ENCODE measurements at regions of chrX and their contacts with region 1.

Region 1: DNA sequence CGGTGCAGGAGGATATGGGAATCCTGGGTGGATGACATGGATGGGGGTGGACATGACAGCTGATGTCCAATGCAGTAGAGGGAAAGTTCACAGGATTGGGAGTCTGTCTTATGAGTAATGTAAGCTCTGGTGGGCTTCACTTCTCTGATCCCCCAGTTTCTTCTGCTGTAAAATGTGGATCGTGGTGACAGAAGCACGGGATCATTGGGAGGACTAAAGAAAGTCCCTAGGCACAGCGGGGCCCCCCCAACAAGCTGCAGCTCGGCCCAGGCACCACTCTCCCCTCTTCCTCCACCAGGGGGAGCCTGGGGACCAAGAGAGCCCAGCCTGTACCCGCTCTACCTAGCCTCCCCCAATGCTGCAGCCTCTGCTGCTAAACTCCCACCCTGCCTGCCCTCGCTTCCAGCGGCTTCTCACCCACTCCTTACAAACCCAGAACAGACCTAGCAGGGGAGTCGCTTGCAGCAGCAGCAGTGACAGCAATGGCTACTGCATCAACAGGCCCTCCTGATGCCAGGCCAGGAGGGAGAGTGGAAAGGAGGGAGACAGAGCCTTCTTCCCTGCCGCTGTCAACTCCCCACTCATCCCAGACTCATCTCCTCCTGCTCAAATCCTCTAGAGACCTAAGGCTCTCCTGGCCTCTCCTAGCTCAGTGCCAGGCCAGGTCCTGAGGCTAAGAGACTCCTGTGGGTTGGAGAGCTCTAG is 36.1 kb upstream of the IQSEC2 start:
- DNase-seq: peak; percentile 15 to 82
- H3K4me3 ChIP-seq: peak overlapping the region in 2 of 4 experiments; percentile 3 to 19; a peak in 2 of 8 replicates
- H3K27ac ChIP-seq: no peak overlapping the region
- H3K4me1 ChIP-seq: peaks cover 4 to 20% (median 7%) of the 10 kb centered on the region in 4 experiments
- H3K27me3 ChIP-seq: peaks cover 1 to 29% (median 16%) of the 10 kb centered on the region in 4 experiments; a peak in 6 of 7 replicates
- CTCF ChIP-seq: peak in 2 of 3 experiments; percentile 68 to 72; a peak in 3 of 4 replicates
- EP300 ChIP-seq: no peak
- POLR2A ChIP-seq: no peak
- RAD21 ChIP-seq: peak; percentile 67 to 76

Region 2: DNA sequence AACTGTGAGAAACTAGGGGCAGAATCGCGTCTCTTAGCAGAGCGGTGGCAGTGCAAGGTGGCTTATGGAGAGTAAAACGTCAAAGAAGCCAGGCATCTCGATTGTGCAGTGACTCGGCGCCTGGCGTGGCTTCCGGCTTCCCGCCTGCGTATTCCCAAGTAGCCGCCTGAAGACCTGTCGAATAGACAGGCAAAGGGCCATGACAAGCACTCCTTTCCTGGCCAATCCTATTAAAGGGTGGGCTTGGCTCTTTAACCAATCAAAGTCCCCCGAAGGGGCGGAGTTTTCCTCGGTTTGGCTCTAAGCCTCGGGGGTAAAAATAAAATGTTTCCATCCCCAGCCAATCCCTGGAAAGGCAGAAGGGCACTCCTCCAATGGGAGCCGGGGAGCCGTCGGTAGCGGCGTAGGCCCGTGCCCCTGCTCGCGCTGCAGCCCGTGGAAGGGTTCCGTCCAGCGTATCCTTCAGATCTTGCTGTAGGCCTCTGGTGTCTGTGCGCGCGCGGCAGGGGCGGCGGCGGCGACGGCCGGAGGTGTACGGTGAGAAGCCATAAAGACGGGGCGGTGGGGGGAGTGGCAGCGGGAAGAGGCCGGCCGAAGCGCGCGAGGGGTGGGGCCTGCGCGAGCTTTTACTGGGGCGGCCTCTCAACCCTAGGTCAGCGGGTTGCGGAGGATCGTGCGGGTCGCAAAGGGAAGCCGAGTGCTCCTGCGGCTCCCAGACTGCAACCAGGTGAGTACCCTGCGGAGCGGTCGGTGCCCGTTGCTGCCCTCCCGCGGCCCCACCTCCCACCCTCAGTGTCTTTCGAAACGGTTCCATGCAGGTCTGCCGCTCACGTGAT is 223.6 kb before region 1 on chrX and contains the start of gene KANTR:
- CTCF ChIA-PET with region 1: no interaction called
- POLR2A ChIA-PET with region 1: no interaction called
- DNase-seq: peak; percentile 62 to 76
- H3K4me3 ChIP-seq: peak within 1 kb of the TSS; percentile 63 to 95 (median 76)
- H3K27ac ChIP-seq: peak within 1 kb of the TSS; percentile 71
- H3K4me1 ChIP-seq: no peaks in the 10 kb centered on the region
- H3K27me3 ChIP-seq: no peaks in the 10 kb centered on the region
- CTCF ChIP-seq: no peak
- EP300 ChIP-seq: no peak
- POLR2A ChIP-seq: peak in 1 of 2 experiments; percentile 15; a peak in 1 of 3 replicates
- RAD21 ChIP-seq: no peak
- total RNA-seq, gene KANTR: 7.5 and 9.5 TPM in 2 replicates

Region 3: GRCh38 chrX:53116101-53116500 is 201.4 kb before region 1 on chrX:
- CTCF ChIA-PET with region 1: no interaction called
- POLR2A ChIA-PET with region 1: no interaction called
- DNase-seq: no peak
- H3K4me3 ChIP-seq: no peak overlapping the region
- H3K27ac ChIP-seq: no peak overlapping the region
- H3K4me1 ChIP-seq: 0 out of 7 replicates have a peak, but pooled peaks cover 0 to 2% (median 0%) of the 10 kb centered on the region in 4 experiments
- H3K27me3 ChIP-seq: no peaks in the 10 kb centered on the region
- CTCF ChIP-seq: no peak
- EP300 ChIP-seq: no peak
- POLR2A ChIP-seq: no peak
- RAD21 ChIP-seq: no peak

Region 4: DNA sequence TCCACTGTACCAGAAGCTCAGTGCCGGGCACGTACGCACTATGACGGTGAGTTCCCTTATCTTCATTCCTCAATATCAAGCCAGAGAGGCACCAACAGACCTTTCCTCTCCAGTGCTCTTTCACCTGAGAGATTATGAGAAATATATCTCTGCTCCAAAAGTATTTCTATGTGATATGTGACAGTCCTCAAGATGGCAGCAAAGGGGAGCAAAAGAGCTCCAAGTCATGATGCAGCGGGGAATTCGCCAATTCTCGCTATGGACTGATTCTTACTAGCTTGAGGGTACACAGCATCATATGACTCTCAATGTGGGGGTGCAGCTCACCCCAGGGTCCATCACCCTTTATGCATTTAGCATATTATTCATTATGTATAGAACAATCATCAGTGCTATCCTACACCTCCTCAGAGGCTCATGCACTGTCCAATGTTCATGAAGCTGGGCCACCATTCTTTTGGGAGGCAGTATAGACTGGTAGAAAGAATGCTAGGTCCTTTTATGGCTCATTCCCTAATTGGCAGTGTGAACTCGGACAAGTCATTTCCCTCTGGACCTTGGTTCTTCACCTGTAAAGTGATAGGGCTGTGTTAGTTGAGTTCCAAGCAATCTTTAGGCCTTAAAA is 23.4 kb before region 1 on chrX:
- CTCF ChIA-PET with region 1: interaction called, 16 read pairs
- POLR2A ChIA-PET with region 1: no interaction called
- DNase-seq: no peak
- H3K4me3 ChIP-seq: no peak overlapping the region
- H3K27ac ChIP-seq: no peak overlapping the region
- H3K4me1 ChIP-seq: no peaks in the 10 kb centered on the region; a peak in 2 of 7 replicates
- H3K27me3 ChIP-seq: no peaks in the 10 kb centered on the region
- CTCF ChIP-seq: peak in 2 of 3 experiments; percentile 28 to 29; a peak in 3 of 4 replicates
- EP300 ChIP-seq: no peak
- POLR2A ChIP-seq: no peak
- RAD21 ChIP-seq: peak; percentile 47 to 61; a peak in 3 of 4 replicates

Region 5: GRCh38 chrX:53305996-53306937 is 11.2 kb before region 1 on chrX:
- CTCF ChIA-PET with region 1: interaction called, 39 read pairs
- POLR2A ChIA-PET with region 1: no interaction called
- DNase-seq: no peak
- H3K4me3 ChIP-seq: no peak overlapping the region
- H3K27ac ChIP-seq: no peak overlapping the region
- H3K4me1 ChIP-seq: no peaks in the 10 kb centered on the region
- H3K27me3 ChIP-seq: no peaks in the 10 kb centered on the region
- CTCF ChIP-seq: no peak
- EP300 ChIP-seq: no peak
- POLR2A ChIP-seq: no peak
- RAD21 ChIP-seq: no peak

Region 6: GRCh38 chrX:53340852-53341607 is 23.5 kb after region 1 on chrX:
- CTCF ChIA-PET with region 1: interaction called, 18 read pairs
- POLR2A ChIA-PET with region 1: no interaction called
- DNase-seq: no peak
- H3K4me3 ChIP-seq: no peak overlapping the region
- H3K27ac ChIP-seq: no peak overlapping the region
- H3K4me1 ChIP-seq: no peaks in the 10 kb centered on the region
- H3K27me3 ChIP-seq: no peaks in the 10 kb centered on the region
- CTCF ChIP-seq: no peak
- EP300 ChIP-seq: no peak
- POLR2A ChIP-seq: no peak
- RAD21 ChIP-seq: no peak

Region 7: DNA sequence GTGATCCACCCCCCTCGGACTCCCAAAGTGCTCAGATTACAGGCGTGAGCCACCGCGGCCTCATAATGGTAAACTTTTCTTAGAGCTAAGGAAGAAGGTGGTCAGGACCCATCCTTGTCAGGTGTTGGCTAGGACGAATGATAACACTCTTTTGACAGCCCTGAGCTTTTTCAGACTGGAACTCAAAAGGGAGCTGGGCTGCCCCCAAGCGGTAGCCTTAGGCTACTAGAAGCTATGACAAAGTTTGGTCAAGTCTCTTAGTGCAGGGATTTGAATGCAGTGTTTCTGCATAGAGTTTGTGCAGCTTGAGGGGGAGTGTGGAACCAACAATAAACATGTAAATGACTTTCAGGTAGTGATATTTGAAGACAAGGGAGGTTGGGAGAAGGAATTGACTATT is 128.5 kb after region 1 on chrX:
- CTCF ChIA-PET with region 1: interaction called, 36 read pairs
- POLR2A ChIA-PET with region 1: no interaction called
- DNase-seq: peak in 1 of 2 experiments; percentile 48
- H3K4me3 ChIP-seq: no peak overlapping the region
- H3K27ac ChIP-seq: no peak overlapping the region
- H3K4me1 ChIP-seq: no peaks in the 10 kb centered on the region
- H3K27me3 ChIP-seq: peaks cover 0 to 2% (median under 1%) of the 10 kb centered on the region in 4 experiments; a peak in 3 of 7 replicates
- CTCF ChIP-seq: peak; percentile 5 to 67 (median 62)
- EP300 ChIP-seq: no peak
- POLR2A ChIP-seq: no peak
- RAD21 ChIP-seq: peak; percentile 57 to 70

Measured in H1 (cell line).